ENCODE measurements at regions of chr6 and their contacts with region 1.

Region 1: DNA sequence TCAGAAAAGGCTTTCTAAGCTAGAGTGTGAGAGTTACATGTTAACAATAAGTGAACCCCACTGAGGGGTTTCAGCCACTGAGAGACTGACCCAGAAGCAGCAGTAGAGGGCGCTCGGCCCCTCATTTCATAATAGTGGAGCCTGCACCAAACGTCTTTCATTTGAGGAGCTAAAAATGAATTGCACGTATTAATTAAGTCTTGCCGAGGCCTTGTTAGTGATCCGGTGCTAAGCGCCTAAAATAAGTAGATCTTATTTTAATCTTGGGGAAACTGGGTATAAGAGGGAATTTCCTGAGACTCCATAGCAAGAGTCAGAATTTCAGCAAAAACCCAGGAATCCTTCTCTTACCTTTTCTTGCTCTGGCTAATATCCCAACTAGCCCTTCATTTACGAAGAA is 209.7 kb downstream of the FARS2 start:
- DNase-seq: no peak
- H3K4me3 ChIP-seq: no peak overlapping the region
- CTCF ChIP-seq: peak; percentile 77

Region 2: DNA sequence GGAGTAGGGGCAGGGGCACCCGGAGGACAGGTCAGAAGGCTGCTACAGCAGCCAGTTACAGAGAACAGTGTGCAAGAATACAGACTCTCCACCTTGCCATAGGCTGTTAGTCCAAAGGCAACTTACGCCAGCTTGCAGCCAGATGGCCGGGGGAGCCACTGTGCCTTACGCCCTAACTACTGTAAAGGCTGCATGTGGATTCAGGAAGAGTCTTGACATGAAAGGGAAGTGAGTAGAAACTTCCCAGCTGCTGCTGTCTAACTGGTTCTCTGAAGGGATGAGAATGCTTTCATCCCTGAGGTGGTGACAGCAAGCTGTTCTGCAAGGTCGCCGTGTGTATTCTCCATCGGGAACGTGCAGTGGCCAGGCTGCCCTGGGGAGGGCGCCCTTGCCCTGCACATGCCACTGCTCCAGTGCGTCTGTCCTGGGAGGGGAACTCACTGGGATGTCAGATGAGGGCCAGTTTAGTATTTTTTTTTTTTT is 256.4 kb before region 1 on chr6:
- CTCF ChIA-PET with region 1: no interaction called
- POLR2A ChIA-PET with region 1: no interaction called
- DNase-seq: no peak
- H3K4me3 ChIP-seq: no peak overlapping the region
- CTCF ChIP-seq: peak; percentile 93

Region 3: DNA sequence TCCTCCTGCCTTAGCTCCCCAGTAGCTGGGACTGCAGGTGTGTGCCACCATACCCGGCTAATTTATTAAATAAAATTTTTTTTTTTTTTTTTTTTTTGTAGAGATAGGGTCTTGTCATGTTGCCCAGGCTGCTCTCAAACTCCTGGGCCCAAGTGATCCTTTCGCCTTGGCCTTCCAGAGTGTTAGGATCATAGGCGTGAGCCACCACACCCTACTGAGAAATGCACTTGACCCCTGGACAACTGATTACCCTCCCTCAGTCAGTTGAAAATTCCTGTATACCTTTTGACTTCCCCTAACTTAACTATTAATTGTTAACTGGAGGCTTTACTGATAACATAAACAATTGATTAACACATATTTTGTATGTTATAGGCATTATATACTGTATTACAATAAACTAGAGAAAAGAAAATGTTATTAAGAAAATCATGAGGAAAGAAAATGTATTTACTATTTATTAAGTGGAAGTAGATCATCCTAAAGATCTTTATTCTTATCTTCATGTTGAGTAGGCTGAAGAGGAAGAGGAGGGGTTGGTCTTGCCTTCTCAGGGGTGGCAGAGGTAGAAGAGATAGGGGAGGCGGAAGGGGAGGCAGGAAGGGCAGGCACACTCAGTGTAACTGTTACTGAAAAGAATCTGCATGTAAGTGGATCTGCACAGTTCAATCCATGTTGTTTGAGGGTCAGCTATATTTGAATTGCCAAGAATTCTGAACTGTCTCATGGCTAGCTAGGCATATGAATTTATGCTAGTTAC is 105.4 kb before region 1 on chr6:
- CTCF ChIA-PET with region 1: no interaction called
- POLR2A ChIA-PET with region 1: no interaction called
- DNase-seq: no peak
- H3K4me3 ChIP-seq: no peak overlapping the region
- CTCF ChIP-seq: no peak

Region 4: DNA sequence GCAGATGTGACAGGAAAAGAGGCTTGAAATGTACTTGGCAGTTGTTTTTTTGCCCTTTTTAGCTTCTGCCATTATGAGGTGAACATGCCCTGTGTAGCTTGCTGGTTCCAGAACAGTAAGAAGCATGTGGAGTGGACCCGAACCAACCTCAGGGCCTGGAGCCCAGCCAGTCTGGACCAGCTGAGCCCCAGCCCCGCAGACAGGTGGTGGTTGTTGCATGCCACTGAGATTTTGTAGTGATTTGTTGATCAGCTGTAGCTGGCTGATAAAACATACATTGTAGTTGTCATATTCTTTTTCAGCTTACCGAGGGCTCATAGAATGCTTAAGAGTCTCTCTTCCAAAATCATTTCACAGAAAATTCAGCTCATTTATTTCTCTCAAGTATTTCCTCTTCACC is 27.6 kb before region 1 on chr6:
- CTCF ChIA-PET with region 1: interaction called, 11 read pairs
- POLR2A ChIA-PET with region 1: no interaction called
- DNase-seq: no peak
- H3K4me3 ChIP-seq: no peak overlapping the region
- CTCF ChIP-seq: no peak

Region 5: GRCh38 chr6:5457041-5457440 is 14.0 kb before region 1 on chr6:
- CTCF ChIA-PET with region 1: interaction called, 13 read pairs
- POLR2A ChIA-PET with region 1: no interaction called
- DNase-seq: no peak
- H3K4me3 ChIP-seq: no peak overlapping the region
- CTCF ChIP-seq: no peak

Region 6: DNA sequence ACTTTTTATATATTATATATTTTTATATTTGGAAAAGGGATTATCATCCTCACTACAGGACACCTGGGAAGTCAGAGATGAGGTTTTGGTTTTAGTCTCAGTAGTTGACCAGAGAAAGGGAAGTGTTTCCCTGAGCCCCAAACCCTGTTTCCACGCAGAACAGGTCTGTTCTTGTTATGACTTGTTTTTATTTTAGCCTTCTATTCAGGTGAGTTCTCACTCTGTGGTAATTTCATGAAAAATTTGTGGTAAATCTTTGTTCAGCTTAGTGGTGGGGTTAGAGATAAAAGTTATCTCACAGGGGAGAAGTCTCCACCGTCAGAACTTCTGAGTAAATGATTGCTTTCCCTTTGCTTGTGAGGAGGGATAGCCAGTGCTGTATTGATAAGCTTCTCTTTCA is 15.2 kb after region 1 on chr6:
- CTCF ChIA-PET with region 1: interaction called, 86 read pairs
- POLR2A ChIA-PET with region 1: no interaction called
- DNase-seq: no peak
- H3K4me3 ChIP-seq: no peak overlapping the region
- CTCF ChIP-seq: no peak

Region 7: DNA sequence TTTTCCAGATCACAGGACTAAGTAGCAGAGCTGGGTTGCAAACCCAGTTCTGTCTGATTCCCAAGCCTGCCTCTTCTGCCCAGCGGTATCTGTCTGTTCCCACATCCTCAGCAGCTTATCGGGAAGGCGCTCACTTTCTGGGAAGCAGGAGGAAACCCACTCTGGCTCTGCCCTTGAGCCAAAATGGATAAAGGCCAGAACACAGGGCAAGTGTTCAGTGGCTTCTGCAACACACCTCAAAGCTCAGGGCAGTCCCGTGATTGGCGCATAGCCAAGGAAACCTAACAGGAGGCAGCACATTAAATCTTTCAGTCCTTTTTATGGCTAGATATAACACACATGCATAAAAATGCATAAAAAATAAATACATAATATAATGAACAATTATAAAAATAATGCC is 273.5 kb after region 1 on chr6:
- CTCF ChIA-PET with region 1: interaction called, 13 read pairs
- POLR2A ChIA-PET with region 1: no interaction called
- DNase-seq: no peak
- H3K4me3 ChIP-seq: no peak overlapping the region
- CTCF ChIP-seq: no peak

Region 8: DNA sequence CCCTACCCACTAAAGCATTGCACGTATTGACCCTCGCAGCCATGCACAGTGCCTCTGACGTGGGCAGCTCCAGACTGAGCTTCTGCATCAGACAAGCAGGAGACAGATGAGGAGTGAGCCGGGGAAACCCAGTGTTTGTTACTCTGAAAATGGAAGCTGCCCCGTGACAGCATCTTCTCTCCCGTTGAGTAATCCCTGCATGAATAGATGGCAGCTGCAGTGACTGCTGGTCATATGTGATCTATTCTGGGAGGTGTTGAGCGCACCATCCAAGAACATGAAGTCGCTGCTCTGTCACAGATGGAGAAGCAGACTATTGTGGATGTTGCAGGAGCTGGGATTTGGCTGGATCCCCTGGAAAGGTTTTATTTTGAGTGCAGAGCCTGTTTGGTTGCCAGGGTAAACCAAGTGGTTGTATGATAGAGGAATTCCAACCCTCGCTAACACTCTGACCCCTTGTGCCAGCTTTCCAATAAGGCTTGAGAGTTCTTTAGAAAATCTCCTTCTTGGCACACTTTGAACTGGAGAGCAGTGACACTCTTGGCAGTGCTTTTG is 293.4 kb after region 1 on chr6:
- CTCF ChIA-PET with region 1: interaction called, 15 read pairs
- POLR2A ChIA-PET with region 1: no interaction called
- DNase-seq: no peak
- H3K4me3 ChIP-seq: no peak overlapping the region
- CTCF ChIP-seq: no peak

Region 9: GRCh38 chr6:6008648-6009421 is 537.8 kb after region 1 on chr6:
- CTCF ChIA-PET with region 1: interaction called, 12 read pairs
- POLR2A ChIA-PET with region 1: interaction called, 3 read pairs
- DNase-seq: no peak
- H3K4me3 ChIP-seq: peak overlapping the region; percentile 87
- CTCF ChIP-seq: no peak